ENCODE measurements at regions of chr21 and their contacts with region 1.

Region 1: GRCh38 chr21:26170471-26171257 is at the start of gene APP:
- DNase-seq: peak; percentile 49 to 69
- ATAC-seq: peak; percentile 69 to 77
- H3K4me3 ChIP-seq: peak within 1 kb of the TSS; percentile 69 to 91 (median 78)
- H3K27ac ChIP-seq: peak within 1 kb of the TSS; percentile 78 to 82 (median 82)
- H3K4me1 ChIP-seq: peaks cover 3 to 20% of the 10 kb centered on the region in 2 donors
- H3K27me3 ChIP-seq: peaks cover 5 to 24% (median 18%) of the 10 kb centered on the region in 3 donors
- CTCF ChIP-seq: peak; percentile 75 to 98 (median 96)
- POLR2A ChIP-seq: peak; percentile 59 to 81
- total RNA-seq, gene APP: 45.8 to 73.2 (median 70.1) TPM

Region 2: DNA sequence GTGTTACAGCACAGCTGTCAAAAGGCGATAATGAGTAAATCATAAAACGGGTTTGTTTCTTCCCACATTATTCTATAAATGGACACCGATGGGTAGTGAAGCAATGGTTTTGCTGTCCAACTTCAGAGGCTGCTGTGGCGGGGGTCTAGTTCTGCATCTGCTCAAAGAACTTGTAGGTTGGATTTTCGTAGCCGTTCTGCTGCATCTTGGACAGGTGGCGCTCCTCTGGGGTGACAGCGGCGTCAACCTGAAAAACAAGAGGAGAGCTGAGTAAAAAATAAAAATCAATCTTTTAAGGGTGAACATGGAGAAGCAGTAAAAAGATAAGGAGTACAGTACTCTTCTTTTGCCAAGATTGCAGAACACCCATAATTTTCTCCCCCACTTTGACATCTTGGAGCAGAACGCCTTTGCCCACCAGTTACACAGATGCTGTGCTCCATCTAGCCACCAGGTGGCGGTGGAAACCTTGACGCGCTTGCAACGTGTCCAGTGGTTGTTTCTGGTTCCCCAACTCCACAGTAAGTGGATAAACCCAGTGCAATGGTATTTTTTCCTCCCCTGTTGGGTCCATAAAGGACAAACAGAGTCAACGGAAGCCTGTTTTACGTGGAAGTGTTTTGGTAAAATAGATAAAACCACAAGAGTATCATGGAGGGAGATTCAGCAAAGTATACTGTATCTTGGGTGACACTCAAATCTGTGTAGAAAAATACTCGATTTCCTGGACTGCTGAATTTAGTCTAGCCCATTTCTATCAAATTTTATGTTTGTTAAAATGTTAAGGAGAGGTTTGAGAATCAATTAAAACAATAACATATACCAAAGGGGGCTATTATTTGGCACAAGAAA is 288.9 kb before region 1 on chr21:
- in situ Hi-C with region 1: loop called in 1 of 4 experiments (anchors 10 kb)
- intact Hi-C with region 1: loop called (anchors 1 kb)
- DNase-seq: peak; percentile 10 to 27
- ATAC-seq: peak in 1 of 2 donors; percentile 75
- H3K4me3 ChIP-seq: no peak overlapping the region
- H3K27ac ChIP-seq: no peak overlapping the region
- H3K4me1 ChIP-seq: no peaks in the 10 kb centered on the region
- H3K27me3 ChIP-seq: no peaks in the 10 kb centered on the region
- CTCF ChIP-seq: peak; percentile 78 to 91 (median 82)
- POLR2A ChIP-seq: no peak

Region 3: DNA sequence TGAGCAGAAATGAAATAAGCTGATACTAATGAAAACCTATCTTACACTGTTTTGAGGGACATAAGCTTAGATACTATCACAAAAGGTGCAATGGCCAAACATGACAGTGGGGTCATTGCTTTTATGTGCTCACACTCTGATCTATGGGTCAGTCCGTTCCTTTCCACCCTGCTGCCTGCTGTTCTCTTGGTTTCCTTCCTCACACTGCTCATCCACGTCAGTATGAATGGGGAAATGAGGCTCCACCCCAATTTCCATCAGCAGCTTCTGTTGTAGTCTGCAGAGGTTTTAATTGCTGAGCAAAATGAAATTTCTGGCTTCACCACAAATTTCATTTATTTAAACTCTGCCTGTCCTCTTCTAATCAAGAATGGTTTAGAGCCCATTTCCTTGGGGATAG is 280.7 kb before region 1 on chr21:
- in situ Hi-C with region 1: loop called (anchors 5 to 10 kb)
- intact Hi-C with region 1: no loop called
- DNase-seq: no peak
- ATAC-seq: no peak
- H3K4me3 ChIP-seq: no peak overlapping the region
- H3K27ac ChIP-seq: no peak overlapping the region
- H3K4me1 ChIP-seq: no peaks in the 10 kb centered on the region
- H3K27me3 ChIP-seq: no peaks in the 10 kb centered on the region
- CTCF ChIP-seq: no peak
- POLR2A ChIP-seq: no peak

Region 4: DNA sequence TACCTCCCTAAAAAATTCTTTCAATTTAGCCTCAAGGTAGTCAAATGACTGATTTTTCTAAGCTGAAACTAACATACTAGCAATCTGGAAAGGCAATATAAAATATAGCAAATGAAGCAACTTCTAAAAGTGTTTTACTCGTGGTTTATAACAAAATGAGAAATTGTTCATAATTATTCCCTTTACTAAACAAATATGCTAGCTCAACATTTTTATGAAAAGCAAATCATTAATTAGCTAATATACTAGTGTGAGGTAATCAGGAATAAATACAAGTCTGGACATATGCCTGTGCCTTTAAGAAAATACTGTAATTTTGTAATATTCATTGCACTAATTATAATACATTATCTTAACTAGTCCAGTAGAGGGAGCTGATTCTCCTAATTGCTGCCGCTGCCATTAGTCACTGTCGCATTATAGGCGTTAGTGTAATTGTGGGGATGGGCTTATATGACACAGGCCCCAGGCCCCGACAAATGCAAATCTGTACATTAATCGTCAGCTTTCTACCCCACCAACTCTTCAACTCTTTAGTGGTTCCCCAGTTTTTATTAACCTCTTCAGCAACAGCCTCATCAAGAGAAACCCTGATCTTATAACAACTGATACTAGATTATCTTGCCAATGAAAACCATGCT is 275.0 kb before region 1 on chr21:
- in situ Hi-C with region 1: loop called in 3 of 4 experiments (anchors 5 to 10 kb)
- intact Hi-C with region 1: loop called (anchors 2 kb)
- DNase-seq: no peak
- ATAC-seq: peak; percentile 56 to 82
- H3K4me3 ChIP-seq: no peak overlapping the region
- H3K27ac ChIP-seq: no peak overlapping the region
- H3K4me1 ChIP-seq: peaks cover 0 to 16% of the 10 kb centered on the region in 2 donors
- H3K27me3 ChIP-seq: no peaks in the 10 kb centered on the region
- CTCF ChIP-seq: peak in 4 of 5 experiments; percentile 19 to 51 (median 44)
- POLR2A ChIP-seq: no peak

Region 5: GRCh38 chr21:26007951-26008498 is 162.6 kb before region 1 on chr21:
- in situ Hi-C with region 1: no loop called
- intact Hi-C with region 1: loop called (anchors 10 kb)
- DNase-seq: no peak
- ATAC-seq: peak in 1 of 2 donors; percentile 79
- H3K4me3 ChIP-seq: peak overlapping the region in 1 of 4 donors; percentile 0
- H3K27ac ChIP-seq: peak overlapping the region; percentile 25 to 54 (median 37)
- H3K4me1 ChIP-seq: peaks cover 3 to 15% of the 10 kb centered on the region in 2 donors
- H3K27me3 ChIP-seq: no peaks in the 10 kb centered on the region
- CTCF ChIP-seq: no peak
- POLR2A ChIP-seq: no peak

Region 6: GRCh38 chr21:26032263-26032662 is 138.4 kb before region 1 on chr21:
- in situ Hi-C with region 1: no loop called
- intact Hi-C with region 1: no loop called
- DNase-seq: no peak
- ATAC-seq: no peak
- H3K4me3 ChIP-seq: no peak overlapping the region
- H3K27ac ChIP-seq: no peak overlapping the region
- H3K4me1 ChIP-seq: no peaks in the 10 kb centered on the region
- H3K27me3 ChIP-seq: no peaks in the 10 kb centered on the region
- CTCF ChIP-seq: no peak
- POLR2A ChIP-seq: no peak

Measured in gastrocnemius medialis (tissue), 4 donors.